ENCODE measurements at regions of chr13 and their contacts with region 1.

Region 1: DNA sequence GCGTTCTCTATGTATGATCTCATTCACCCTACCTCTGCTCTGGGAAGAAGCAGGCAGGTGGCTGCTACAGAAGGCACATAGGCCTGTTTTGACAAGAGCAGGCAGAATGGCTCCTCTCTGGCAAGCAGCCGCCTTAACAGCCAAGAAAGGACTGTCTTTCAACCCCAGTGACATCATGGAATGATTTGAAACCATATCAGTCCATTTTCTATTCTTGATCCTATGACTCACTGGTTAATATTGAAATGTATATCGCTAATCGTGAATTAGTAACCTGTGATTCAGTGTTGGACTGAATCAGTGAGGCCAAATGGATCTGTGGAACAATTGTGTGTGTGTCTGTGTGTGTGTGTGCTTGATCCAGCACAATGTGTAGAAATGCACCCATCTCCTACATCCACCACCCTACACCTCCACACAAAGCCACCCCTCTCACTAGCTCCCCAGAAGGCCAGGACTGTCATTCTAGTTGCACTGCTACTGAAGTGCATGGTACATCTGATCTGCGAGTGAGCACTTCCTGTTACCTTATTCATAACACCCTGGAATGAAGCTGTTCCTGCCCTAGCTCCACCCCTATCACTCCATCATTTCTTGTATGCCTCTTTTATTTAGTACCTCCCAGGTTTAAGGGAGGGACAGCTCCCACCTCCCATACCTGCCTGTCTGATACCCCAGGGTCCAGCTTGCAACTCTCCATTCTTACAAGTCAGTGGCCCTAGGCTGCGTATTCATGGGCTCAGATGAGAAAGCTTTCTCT is 460.0 kb downstream of the FOXO1 start:
- DNase-seq: no peak
- H3K4me3 Mint-ChIP-seq: peak overlapping the region; percentile 37
- H3K27ac Mint-ChIP-seq: peak overlapping the region; percentile 97
- H3K4me1 Mint-ChIP-seq: peaks cover 20% of the 10 kb centered on the region
- H3K27me3 Mint-ChIP-seq: no peaks in the 10 kb centered on the region

Region 2: GRCh38 chr13:40109356-40109844 is 97.0 kb before region 1 on chr13:
- intact Hi-C with region 1: loop called (anchors 1 kb)
- DNase-seq: no peak
- H3K4me3 Mint-ChIP-seq: no peak overlapping the region
- H3K27ac Mint-ChIP-seq: peak overlapping the region; percentile 13
- H3K4me1 Mint-ChIP-seq: peaks cover 25% of the 10 kb centered on the region
- H3K27me3 Mint-ChIP-seq: peaks cover 4% of the 10 kb centered on the region

Region 3: GRCh38 chr13:40190641-40191100 is 15.8 kb before region 1 on chr13:
- intact Hi-C with region 1: loop called (anchors 2 kb)
- DNase-seq: peak; percentile 55
- H3K4me3 Mint-ChIP-seq: peak overlapping the region; percentile 31
- H3K27ac Mint-ChIP-seq: peak overlapping the region; percentile 79
- H3K4me1 Mint-ChIP-seq: peaks cover 59% of the 10 kb centered on the region
- H3K27me3 Mint-ChIP-seq: peaks cover 2% of the 10 kb centered on the region